ENCODE measurements at regions of chr7 and their contacts with region 1.

Region 1: DNA sequence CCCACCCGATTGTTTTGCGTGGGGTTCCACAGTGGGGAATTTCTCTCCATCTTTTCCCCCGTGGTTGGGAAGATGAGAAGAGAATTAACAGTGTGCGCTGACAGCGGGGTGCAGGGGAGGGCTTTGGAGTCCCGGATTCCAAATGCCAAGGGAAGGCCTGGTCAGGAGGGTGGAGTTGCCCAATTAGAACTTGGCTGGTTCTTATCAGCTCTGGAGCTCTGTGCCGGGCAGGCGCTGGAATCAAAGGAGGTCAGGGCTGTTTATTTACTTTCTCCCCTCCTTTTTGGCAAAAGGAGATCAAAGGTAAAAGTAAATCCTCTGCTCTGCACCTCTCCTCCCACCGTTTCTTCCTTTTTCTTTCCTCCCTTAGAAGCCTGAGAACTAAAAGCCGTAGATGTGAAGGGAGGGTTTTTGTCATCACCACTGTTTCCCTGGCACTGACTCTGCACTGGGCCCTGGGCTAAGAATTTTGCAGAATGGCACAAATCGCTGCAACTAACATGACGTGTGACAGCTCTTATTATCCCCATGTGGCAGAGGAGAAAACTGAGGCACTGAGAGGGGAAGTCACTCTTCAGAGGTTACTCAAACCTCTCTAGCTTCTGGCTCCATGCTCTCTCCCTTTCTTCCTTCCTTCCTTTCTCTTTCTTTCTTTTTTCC is 95.2 kb upstream of the ZNF716 start:
- DNase-seq: peak; percentile 29
- ATAC-seq: peak; percentile 91 to 96

Region 2: DNA sequence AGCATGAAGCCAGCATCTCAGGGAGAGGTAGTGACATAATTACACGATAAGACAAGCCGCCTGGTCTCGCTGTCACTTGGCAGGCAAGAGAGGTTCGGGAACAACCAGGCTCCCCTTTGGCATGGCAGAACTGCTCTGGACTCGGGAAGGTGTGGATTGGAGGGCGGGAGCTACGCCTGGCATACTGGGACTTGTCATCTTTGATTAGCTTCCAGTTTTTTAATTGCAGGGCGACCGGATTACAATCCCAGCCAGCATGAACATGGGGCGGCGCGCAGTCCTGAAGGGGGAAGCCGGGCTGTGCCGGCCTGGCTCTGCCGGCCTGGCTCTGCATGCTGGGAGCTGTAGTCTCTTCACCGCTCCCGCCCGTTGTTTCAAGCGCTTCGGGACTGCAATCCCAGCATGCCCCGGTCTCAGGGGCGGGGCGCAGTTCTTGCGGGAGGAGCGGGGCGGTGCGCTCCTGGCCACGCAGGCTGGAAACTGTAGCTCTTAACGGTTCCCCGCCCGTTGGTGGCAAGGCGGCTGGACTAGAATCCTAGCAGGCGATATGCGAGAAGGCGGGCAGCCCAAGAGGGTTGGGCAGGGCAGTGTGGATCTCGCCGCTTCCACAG is 49.6 kb after region 1 on chr7:
- intact Hi-C with region 1: loop called in 1 of 2 experiments (anchors 10 kb)
- DNase-seq: peak; percentile 88
- ATAC-seq: peak; percentile 98

Measured in left cardiac atrium (tissue), 4 donors.